Posterior cingulate gyrus (tissue), 11 donors: ENCODE measurements at regions of chr18 and their contacts with region 1.

Region 1: DNA sequence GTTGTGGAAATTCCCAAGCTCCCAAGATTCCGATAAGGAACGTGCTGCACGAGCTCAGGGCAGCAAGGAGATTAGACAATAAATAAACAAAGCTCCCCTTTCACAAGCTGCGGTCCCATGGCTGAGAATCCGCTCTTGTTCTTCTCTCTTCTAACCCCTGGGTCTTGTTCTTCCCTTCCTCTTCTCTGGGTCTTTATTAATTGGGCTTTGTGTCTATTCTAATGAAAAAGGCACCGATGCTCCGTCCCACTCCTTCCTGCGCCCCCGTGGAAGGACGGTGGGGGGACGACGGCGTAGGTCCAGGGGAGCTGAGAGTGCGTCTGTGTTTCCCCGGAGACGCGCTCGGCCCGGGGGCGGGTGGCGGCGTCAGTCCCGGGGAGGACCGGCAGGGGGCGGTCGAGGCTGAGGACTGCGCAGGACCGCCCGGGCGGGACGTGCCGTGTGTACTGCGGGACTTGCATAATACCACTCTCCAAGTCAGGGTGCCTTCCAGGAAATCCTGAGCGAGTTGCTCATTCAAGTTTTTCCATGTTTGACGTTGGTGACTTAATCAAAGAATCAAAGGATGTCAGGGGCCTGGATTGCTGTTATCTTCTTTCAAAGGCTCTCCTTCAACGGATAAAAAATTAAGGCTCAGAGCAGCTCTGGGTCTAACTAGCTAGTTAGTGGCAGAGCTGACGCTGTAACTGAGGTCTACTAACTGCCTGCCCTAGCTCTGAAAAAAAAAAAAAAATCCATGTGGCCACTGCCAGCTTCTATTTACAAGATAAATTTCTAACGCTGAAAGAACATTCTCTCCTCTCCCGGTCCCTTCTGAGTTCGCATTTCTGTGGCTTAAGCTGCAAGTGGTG is 321.4 kb downstream of the TGIF1 start:
- DNase-seq: peak; percentile 76 to 98 (median 86)

Region 2: DNA sequence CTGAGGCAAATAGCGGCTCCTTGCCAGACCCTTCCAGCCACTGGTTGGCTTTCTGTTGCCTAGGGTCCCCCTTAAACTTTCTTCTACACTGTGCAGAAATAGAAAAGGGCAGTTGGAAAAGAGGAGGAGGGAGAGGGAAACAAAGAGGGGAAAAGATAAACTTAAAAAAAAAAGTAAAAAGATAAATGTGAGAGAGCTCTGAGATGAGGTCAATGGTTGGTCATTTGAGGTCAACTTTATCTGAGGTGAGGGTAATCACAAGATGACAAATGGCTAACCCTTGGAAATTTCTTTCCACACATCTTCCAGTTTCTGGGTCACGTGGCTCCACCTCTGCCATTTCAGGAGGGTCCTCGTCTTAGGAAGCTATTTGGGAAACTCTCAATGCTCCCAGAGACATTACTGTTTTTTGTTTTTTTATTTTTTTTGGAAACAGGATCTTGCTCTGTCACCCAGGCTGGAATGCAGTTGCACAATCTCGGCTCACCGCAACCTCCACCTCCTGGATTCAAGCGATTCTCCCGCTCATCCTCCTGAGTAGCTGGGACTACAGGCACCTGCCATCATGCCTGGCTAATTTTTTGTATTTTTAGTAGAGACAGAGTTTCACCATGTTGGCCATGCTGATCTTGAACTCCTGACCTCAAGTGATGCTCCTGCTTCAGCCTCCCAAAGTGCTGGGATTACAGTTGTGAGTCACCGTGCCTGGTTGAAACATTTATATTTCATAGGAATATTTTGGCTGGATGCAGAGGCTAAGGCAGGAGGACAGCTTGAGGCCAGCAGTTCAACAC is 121.5 kb before region 1 on chr18:
- intact Hi-C with region 1: no loop called
- DNase-seq: no peak

Region 3: GRCh38 chr18:3703732-3704176 is 67.6 kb before region 1 on chr18:
- intact Hi-C with region 1: loop called (anchors 10 kb)
- DNase-seq: peak; percentile 41 to 93 (median 70)

Region 4: DNA sequence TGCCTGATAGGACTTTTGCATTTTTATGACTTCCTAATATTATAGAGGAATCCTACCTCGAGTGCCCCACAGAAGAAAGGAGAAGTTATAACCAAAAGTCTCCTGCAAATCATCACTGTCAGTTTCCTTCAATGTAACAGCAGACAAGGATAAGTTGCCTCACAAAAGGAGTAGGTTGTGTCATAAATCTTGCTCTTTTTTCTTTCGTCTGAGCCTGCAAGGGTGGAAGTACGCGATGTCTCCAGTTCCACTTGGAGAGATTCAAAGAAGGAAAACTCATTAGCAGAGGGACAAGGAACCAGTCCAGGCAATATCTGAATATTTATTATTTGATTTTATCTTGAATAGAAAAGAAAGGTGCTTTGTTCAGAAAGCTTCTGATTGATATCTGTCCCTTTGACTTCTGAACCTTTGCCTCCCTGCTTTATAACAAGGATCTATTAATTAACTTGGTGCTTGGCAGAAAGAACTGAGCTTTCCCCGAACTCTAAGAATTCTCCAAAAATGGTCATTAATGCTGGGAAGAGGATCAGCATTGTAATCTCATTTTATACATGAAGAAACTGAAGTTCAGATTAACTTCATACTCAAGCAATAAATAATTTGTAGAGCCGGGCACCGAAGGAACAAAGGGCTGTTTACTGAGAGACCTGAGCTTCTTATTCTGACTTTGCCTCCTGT is 48.9 kb before region 1 on chr18:
- intact Hi-C with region 1: no loop called
- DNase-seq: no peak

Region 5: GRCh38 chr18:3869848-3870247 is 98.5 kb after region 1 on chr18:
- intact Hi-C with region 1: loop called (anchors 1 kb)
- DNase-seq: no peak

Region 6: DNA sequence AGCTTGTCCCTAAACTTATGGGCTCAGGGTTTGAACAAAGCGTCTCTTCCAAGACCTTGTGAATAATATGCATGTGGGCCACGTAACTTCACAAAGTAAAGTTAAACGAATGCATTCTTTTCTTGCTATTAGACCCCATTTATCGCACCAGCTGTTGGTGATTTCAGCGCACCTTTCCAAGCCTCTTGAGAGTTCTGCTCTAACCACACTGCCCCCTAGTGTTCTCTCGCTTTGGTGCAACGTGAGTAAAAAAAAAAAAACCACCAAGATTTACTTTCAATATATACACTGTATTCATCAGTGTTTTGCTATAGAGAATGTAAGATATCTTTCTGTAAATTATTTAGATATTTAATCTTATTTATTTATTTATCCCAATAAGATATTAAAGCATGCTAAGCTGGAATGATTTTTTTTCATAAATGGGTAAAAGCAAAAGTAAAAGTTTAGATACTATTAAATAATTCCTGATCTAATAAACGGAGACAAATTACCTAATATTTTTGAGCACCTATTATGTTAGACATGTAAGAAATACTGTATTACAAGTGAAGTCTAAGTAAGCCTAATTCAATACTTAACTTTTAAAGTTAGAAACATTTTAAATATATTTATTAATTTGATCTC is 224.2 kb after region 1 on chr18:
- intact Hi-C with region 1: loop called (anchors 1 kb)
- DNase-seq: peak in 6 of 10 donors; percentile 39 to 81 (median 49)

Region 7: DNA sequence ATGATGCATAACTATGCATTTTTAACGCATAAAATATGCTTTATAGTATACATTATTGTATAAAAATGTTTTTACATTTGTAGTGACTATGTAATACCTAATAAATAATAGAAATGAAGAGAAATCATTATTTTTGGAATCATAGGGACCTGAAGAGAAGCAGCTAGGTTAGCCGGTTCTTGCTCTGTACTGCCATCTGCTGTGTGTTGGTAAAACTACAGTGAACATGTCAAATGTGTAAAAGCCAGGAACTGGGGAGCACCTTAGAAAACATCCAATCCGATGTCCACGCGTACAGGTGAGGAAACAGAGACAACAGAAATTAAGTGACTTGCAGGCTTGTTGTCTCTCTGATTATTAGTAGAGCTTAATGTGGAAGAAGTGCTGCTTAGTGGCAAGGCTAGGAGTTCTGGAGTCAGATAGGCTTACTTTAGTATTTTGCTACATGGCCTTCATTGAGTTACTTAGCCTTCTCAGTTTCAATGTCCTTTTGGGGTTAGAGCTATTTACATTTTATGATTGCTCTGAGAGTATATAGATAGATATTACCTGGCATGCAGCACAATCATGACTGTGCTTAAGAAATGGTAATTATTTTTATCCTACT is 297.3 kb after region 1 on chr18:
- intact Hi-C with region 1: loop called (anchors 5 kb)
- DNase-seq: peak in 4 of 10 donors; percentile 21 to 47 (median 25)